MCF 10A (cell line): ENCODE measurements at regions of chr17 and their contacts with region 1.

Region 1: GRCh38 chr17:45172454-45173286 is 11.0 kb downstream of the HEXIM2 start:
- DNase-seq: peak; percentile 98
- H3K4me3 Mint-ChIP-seq: peak overlapping the region; percentile 78
- H3K27ac Mint-ChIP-seq: peak overlapping the region; percentile 99
- H3K4me1 Mint-ChIP-seq: peaks cover 26% of the 10 kb centered on the region
- H3K27me3 Mint-ChIP-seq: no peaks in the 10 kb centered on the region
- CTCF ChIP-seq: peak; percentile 27

Region 2: GRCh38 chr17:44899069-44899782 is 273.4 kb before region 1 on chr17 and contains the start of gene EFTUD2:
- CTCF ChIA-PET with region 1: no interaction called
- POLR2A ChIA-PET with region 1: interaction called, 12 read pairs
- intact Hi-C with region 1: no loop called
- DNase-seq: peak; percentile 87
- H3K4me3 Mint-ChIP-seq: peak within 1 kb of the TSS; percentile 80
- H3K27ac Mint-ChIP-seq: peak within 1 kb of the TSS; percentile 99
- H3K4me1 Mint-ChIP-seq: peaks cover 21% of the 10 kb centered on the region
- H3K27me3 Mint-ChIP-seq: no peaks in the 10 kb centered on the region
- CTCF ChIP-seq: no peak
- total RNA-seq, gene EFTUD2: 119 and 125 TPM in 2 replicates

Region 3: GRCh38 chr17:44924107-44924544 is 248.5 kb before region 1 on chr17:
- CTCF ChIA-PET with region 1: no interaction called
- POLR2A ChIA-PET with region 1: no interaction called
- intact Hi-C with region 1: no loop called
- DNase-seq: no peak
- H3K4me3 Mint-ChIP-seq: no peak overlapping the region
- H3K27ac Mint-ChIP-seq: no peak overlapping the region
- H3K4me1 Mint-ChIP-seq: no peaks in the 10 kb centered on the region
- H3K27me3 Mint-ChIP-seq: no peaks in the 10 kb centered on the region
- CTCF ChIP-seq: no peak

Region 4: DNA sequence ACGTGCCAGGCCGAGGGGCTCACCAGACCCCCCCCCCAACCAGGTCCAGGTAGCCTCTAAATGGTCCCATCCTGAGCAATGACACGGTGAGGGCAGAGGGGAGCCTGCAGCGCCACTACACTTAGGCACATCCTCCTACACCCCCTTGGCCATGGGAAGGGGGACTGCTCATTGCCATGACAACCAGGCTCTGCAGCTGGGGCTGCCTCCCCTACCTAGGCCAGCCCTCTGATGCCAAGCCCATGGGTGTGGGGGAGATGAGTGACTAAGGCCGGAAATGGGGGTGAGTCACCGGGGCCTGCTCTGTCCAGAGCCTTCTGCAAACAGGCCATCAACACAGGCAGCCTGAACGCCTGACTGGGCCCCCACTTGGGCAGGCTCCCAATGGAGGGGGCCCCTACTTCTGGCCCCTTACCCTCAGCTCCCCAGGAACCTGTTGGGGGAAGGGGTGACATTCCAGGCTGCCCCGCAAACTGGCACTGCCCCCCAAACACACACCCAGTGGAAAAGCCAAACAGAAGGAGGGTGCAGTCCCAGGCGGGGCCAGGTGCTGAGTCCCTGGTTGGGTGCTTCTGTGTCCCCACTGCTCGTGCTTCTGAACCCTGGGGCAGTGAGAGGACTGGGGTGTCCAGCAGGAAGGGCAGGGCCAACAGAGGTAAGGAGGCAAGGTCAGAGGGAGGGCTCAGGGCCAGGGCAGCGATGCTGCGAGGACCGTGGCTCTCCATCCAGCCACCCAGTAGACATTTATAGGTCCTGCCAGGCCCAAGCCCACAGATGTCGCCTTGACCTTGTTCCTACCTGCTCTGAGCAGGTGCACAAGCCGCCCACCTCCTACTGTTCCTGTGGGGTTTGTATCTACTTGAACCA is 48.5 kb before region 1 on chr17:
- CTCF ChIA-PET with region 1: no interaction called
- POLR2A ChIA-PET with region 1: interaction called, 10 read pairs
- intact Hi-C with region 1: no loop called
- DNase-seq: peak; percentile 89
- H3K4me3 Mint-ChIP-seq: peak overlapping the region; percentile 35
- H3K27ac Mint-ChIP-seq: peak overlapping the region; percentile 91
- H3K4me1 Mint-ChIP-seq: peaks cover 42% of the 10 kb centered on the region
- H3K27me3 Mint-ChIP-seq: no peaks in the 10 kb centered on the region
- CTCF ChIP-seq: no peak

Region 5: DNA sequence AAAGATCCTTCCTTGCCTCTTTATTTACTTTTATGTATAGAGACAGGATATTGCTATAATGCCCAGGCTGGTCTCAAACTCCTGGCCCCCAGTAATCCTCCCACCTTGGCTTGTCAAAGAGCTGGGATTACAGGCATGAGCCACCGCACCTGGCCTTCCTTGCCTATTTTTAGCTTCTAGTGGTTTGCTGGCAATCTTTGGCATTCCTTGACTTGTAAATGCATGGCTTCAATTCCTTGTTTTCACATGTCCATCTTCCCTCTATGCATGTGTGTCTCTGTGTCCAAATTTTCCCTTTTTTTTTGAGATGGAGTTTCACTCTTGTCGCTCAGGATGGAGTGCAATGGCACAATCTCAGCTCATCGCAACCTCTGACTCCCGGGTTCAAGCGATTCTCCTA is 11.5 kb after region 1 on chr17:
- CTCF ChIA-PET with region 1: interaction called, 6 read pairs
- POLR2A ChIA-PET with region 1: interaction called, 22 read pairs
- intact Hi-C with region 1: no loop called
- DNase-seq: no peak
- H3K4me3 Mint-ChIP-seq: no peak overlapping the region
- H3K27ac Mint-ChIP-seq: no peak overlapping the region
- H3K4me1 Mint-ChIP-seq: peaks cover 10% of the 10 kb centered on the region
- H3K27me3 Mint-ChIP-seq: no peaks in the 10 kb centered on the region
- CTCF ChIP-seq: no peak

Region 6: GRCh38 chr17:45317112-45317928 is 144.7 kb after region 1 on chr17:
- CTCF ChIA-PET with region 1: no interaction called
- POLR2A ChIA-PET with region 1: interaction called, 16 read pairs
- intact Hi-C with region 1: no loop called
- DNase-seq: peak; percentile 100
- H3K4me3 Mint-ChIP-seq: peak overlapping the region; percentile 86
- H3K27ac Mint-ChIP-seq: peak overlapping the region; percentile 98
- H3K4me1 Mint-ChIP-seq: peaks cover 71% of the 10 kb centered on the region
- H3K27me3 Mint-ChIP-seq: no peaks in the 10 kb centered on the region
- CTCF ChIP-seq: no peak